AG04450 (cell line): ENCODE measurements at regions of chr12 and their contacts with region 1.

Region 1: GRCh38 chr12:105705765-105706164 is 375.3 kb downstream of the C12orf75 start:
- DNase-seq: peak; percentile 37
- H3K4me3 ChIP-seq: no peak overlapping the region
- H3K27ac ChIP-seq: no peak overlapping the region
- H3K27me3 ChIP-seq: no peaks in the 10 kb centered on the region
- CTCF ChIP-seq: peak; percentile 84

Region 2: GRCh38 chr12:105420659-105421240 is 285.0 kb before region 1 on chr12:
- CTCF ChIA-PET with region 1: interaction called, 22 read pairs
- POLR2A ChIA-PET with region 1: no interaction called
- DNase-seq: peak; percentile 59
- H3K4me3 ChIP-seq: no peak overlapping the region
- H3K27ac ChIP-seq: no peak overlapping the region
- H3K27me3 ChIP-seq: no peaks in the 10 kb centered on the region
- CTCF ChIP-seq: peak; percentile 90

Region 3: GRCh38 chr12:105721051-105721825 is 15.5 kb after region 1 on chr12:
- CTCF ChIA-PET with region 1: interaction called, 11 read pairs
- POLR2A ChIA-PET with region 1: no interaction called
- DNase-seq: no peak
- H3K4me3 ChIP-seq: no peak overlapping the region
- H3K27ac ChIP-seq: no peak overlapping the region
- H3K27me3 ChIP-seq: peaks cover 4% of the 10 kb centered on the region
- CTCF ChIP-seq: no peak

Region 4: DNA sequence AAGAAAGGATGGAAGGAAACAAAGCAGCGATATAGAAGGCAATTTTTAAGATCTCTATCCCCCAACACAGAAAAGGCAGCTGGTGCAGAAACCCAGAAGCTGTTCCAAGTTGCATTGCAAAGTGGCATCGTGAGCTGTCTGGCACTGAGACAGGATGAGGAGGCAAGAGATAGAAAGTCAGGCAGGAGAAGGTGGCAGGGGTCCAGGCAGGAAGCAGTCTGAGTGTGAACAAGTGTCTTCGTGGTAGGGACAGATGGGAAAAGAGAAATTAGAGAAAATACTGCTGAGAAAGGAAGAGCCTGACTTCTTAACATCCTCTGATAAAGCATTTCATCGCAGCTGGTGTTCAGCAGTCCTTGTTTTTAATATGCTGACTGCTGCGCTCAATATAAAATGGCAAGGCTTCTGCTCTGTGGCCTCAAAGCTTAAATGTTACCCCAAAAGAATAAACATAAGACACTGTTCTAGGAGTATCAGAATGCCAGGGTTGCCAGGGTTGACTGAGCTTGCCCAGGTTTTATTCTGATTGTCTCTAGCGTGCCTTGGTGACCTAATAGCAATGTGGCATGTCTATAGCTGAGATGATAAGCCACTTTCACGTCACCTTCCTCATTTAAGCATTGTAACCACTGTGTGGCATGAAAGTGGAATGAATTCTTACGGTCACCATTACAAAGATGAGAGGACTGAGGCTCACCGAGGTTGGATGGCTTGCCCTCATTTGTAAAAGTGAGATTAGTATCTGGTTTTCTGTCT is 35.4 kb after region 1 on chr12:
- CTCF ChIA-PET with region 1: interaction called, 10 read pairs
- POLR2A ChIA-PET with region 1: no interaction called
- DNase-seq: no peak
- H3K4me3 ChIP-seq: no peak overlapping the region
- H3K27ac ChIP-seq: no peak overlapping the region
- H3K27me3 ChIP-seq: no peaks in the 10 kb centered on the region
- CTCF ChIP-seq: no peak

Region 5: DNA sequence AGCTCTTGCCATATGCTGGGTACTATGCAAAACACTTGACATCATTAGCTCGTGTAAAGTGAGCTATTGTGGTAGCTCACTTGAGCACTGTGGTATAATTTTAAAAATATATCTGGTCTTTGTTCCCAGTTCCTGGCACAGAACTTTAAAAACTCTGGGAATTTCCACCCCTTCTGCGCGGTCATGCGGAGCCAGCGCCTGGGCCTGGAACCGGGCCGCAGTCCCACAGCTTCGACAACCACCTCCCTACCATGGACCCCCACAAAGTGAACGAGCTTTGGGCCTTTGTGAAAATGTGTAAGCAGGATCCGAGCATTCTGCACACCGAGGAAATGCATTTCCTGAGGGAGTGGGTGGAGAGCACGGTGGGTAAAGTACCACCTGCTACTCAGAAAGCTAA is 309.9 kb after region 1 on chr12:
- CTCF ChIA-PET with region 1: no interaction called
- POLR2A ChIA-PET with region 1: no interaction called
- DNase-seq: no peak
- H3K4me3 ChIP-seq: no peak overlapping the region
- H3K27ac ChIP-seq: no peak overlapping the region
- H3K27me3 ChIP-seq: no peaks in the 10 kb centered on the region
- CTCF ChIP-seq: no peak

Region 6: DNA sequence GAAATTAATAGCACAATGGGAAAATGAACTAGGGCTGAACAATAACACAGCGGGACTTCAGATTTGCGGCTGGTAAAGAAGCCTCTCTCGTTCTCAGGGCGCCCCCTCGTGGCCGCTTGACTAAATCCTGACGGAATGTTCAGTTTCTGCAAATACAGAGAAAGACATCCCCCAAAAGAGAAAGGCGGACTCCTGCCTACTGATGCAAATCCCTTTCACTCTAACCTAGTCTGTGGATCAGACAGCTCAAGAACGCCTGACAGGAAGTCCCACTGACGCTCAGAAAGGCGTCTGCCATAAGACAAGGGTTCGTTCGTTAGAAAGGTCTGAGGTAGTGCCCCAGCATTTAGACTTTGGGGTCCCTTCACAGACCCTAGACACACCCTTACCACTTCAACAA is 430.5 kb after region 1 on chr12:
- CTCF ChIA-PET with region 1: interaction called, 102 read pairs
- POLR2A ChIA-PET with region 1: no interaction called
- DNase-seq: peak; percentile 74
- H3K4me3 ChIP-seq: peak overlapping the region; percentile 77
- H3K27ac ChIP-seq: peak overlapping the region; percentile 22
- H3K27me3 ChIP-seq: no peaks in the 10 kb centered on the region
- CTCF ChIP-seq: peak; percentile 81